ENCODE measurements at regions of chr2 and their contacts with region 1.

Region 1: DNA sequence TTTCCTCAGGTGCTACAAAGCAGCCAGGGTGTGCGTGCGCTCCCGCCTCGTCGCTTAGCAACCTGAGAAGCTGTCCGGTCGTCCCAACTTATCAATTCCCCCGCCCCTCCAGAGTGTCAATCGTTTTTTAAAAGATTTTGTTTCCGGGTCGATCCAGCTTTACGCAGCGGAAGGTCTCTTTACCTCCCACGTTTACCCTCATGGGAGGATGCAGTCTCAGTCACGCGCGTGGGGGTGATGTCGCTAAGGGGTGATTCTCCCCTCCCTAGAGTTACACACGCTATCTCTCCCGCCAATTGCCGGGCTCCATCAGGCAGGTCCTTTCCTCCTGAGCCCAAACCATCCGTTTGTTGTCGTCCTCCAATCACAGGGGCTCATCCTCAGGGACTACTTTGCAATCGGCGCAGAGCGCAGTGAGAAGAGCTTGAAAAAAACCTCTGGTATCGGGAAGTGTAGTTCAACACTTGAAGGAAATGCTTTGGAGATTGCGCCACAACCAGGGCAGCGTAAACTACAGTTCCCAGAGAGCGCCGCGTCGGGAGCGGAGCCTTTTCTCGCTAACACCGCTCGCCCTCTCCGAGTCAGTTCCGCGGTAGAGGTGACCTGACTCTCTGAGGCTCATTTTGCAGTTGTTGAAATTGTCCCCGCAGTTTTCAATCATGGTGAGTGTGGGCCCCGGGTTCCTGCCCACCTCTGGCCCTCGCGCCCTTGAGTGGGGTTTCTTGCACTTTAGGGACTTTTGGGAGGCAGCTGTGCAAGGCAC is at the starts of genes MDH1 and WDPCP:
- DNase-seq: peak; percentile 95
- H3K4me3 ChIP-seq: peak within 1 kb of the TSS; percentile 71 to 94 (median 88)
- H3K27ac ChIP-seq: peak within 1 kb of the TSS; percentile 87 to 95 (median 94)
- H3K4me1 ChIP-seq: peaks cover 9 to 39% (median 28%) of the 10 kb centered on the region in 4 donors
- H3K27me3 ChIP-seq: no peaks in the 10 kb centered on the region
- CTCF ChIP-seq: no peak
- EP300 ChIP-seq: no peak
- POLR2A ChIP-seq: peak; percentile 89
- total RNA-seq, gene MDH1: 55.5 to 179 (median 141) TPM
- total RNA-seq, gene WDPCP: 2.6 to 15.5 (median 10.9) TPM

Region 2: DNA sequence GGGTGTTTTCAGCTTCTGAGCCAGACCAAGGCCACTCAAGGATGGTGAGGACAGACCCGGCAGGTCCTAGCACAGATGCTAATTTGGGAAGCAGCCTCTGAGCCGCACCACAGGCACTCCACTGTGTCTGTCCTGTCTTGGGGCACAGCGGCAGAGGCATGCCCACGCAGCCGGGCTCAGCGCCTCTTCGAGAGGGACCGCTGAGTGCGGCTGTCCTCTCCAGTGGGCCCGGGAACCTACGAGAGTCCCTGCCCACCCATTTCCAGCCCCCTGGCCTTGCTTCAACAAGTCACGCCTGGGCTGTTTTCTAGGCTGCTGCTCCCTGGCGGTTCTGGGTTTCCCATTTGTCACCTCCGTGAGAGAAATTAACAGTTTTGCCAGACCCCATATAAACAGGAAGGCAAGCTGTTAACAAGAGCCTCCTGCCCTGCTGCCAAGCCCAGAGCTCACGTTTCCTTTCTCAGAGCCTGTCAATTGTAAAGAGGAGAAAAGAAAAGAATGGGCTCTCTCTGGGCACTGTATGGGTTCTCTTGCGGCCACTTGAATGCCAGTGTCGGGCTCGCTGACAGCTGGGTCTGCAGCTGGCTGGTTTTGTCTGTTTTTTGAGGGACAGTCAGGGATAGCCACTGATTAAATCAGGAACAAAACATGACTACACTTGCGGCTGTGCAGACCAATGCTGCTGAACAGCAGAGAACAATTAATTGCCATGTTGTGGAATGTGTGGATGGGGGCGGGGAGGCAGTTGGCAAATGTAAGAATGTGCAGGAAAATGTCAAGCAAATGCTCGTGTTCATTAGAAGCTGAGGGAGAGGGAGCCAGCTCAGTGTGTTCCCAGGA is 1113.2 kb before region 1 on chr2:
- in situ Hi-C with region 1: no loop called
- intact Hi-C with region 1: no loop called
- DNase-seq: no peak
- H3K4me3 ChIP-seq: peak overlapping the region in 1 of 4 donors; percentile 21
- H3K27ac ChIP-seq: peak overlapping the region; percentile 42 to 81 (median 52)
- H3K4me1 ChIP-seq: peaks cover 3 to 38% (median 10%) of the 10 kb centered on the region in 4 donors
- H3K27me3 ChIP-seq: no peaks in the 10 kb centered on the region
- CTCF ChIP-seq: no peak
- EP300 ChIP-seq: no peak
- POLR2A ChIP-seq: no peak

Region 3: DNA sequence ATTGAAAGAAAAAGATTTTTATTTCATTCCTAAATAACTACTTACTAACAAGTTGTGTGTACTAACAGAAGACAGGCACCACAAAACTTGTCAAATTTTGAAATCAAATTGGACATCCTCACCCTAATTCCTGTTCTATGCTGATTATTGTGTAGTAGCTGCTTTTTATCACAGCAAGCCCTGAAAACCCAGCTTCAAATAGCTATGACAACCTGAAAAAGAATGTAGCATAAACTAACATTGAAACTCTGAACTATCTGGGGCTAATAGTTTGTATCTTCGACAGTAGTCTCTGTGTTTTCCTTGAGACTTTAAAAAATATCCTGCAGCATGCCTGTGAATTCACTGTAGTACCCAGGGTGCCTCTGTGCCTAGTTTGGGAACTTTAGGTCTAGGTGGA is 122.9 kb before region 1 on chr2:
- in situ Hi-C with region 1: no loop called
- intact Hi-C with region 1: loop called (anchors 10 kb)
- DNase-seq: no peak
- H3K4me3 ChIP-seq: no peak overlapping the region
- H3K27ac ChIP-seq: no peak overlapping the region
- H3K4me1 ChIP-seq: no peaks in the 10 kb centered on the region
- H3K27me3 ChIP-seq: no peaks in the 10 kb centered on the region
- CTCF ChIP-seq: no peak
- EP300 ChIP-seq: no peak
- POLR2A ChIP-seq: no peak

Region 4: DNA sequence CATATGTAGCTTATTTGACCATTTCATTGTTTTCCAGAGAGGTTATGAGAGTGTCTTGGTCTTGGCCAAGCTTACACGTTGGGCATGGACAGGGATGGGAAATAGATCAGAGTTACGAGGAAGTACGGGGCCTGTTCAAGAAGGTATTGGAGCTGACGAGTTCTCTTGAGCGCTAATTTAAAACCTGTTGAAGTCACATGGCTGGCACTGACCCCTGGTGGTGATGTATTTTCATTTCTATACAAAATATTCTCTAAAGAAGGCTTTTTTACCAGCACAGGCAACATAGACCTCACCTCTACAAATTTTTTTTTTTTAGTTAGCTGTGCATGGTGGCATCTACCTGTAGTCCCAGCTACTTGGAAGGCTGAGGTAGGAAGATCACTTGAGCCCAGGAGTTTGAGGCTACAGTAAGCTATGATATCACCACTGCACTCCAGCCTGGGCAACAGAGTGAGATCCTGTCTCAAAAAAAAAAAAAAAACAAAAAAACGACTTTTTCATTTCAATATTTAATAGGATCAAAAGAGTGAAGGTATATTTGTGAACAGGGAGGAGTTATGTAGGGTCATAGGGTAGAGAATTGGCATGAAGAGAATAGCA is 272.8 kb after region 1 on chr2:
- in situ Hi-C with region 1: loop called in 1 of 4 experiments (anchors 25 kb)
- intact Hi-C with region 1: no loop called
- DNase-seq: peak; percentile 56
- H3K4me3 ChIP-seq: no peak overlapping the region
- H3K27ac ChIP-seq: peak overlapping the region in 3 of 4 donors; percentile 13 to 67 (median 45)
- H3K4me1 ChIP-seq: peaks cover 5 to 43% (median 18%) of the 10 kb centered on the region in 4 donors
- H3K27me3 ChIP-seq: no peaks in the 10 kb centered on the region
- CTCF ChIP-seq: peak; percentile 50 to 66 (median 63)
- EP300 ChIP-seq: no peak
- POLR2A ChIP-seq: no peak

Measured in transverse colon (tissue), 4 donors.